ENCODE measurements at regions of chr18 and their contacts with region 1.

Region 1: GRCh38 chr18:48446582-48447225 is 37.5 kb upstream of the ZBTB7C start:
- DNase-seq: peak; percentile 75
- H3K4me3 ChIP-seq: no peak overlapping the region
- H3K27ac ChIP-seq: no peak overlapping the region
- H3K4me1 ChIP-seq: no peaks in the 10 kb centered on the region
- H3K27me3 ChIP-seq: peaks cover 12% of the 10 kb centered on the region
- CTCF ChIP-seq: peak; percentile 90

Region 2: GRCh38 chr18:48230467-48231113 is 216.1 kb before region 1 on chr18:
- CTCF ChIA-PET with region 1: no interaction called
- POLR2A ChIA-PET with region 1: no interaction called
- intact Hi-C with region 1: loop called (anchors 2 kb)
- DNase-seq: peak; percentile 60
- H3K4me3 ChIP-seq: no peak overlapping the region
- H3K27ac ChIP-seq: no peak overlapping the region
- H3K4me1 ChIP-seq: peaks cover 9% of the 10 kb centered on the region
- H3K27me3 ChIP-seq: peaks cover 10% of the 10 kb centered on the region
- CTCF ChIP-seq: peak; percentile 68